ENCODE measurements at regions of chr16 and their contacts with region 1.

Region 1: GRCh38 chr16:50065624-50066481 is at the start of gene HEATR3:
- DNase-seq: peak; percentile 95
- H3K4me3 ChIP-seq: peak within 1 kb of the TSS; percentile 76 to 82 (median 76)
- H3K27ac ChIP-seq: peak within 1 kb of the TSS; percentile 67
- H3K4me1 ChIP-seq: peaks cover 27% of the 10 kb centered on the region
- H3K27me3 ChIP-seq: no peaks in the 10 kb centered on the region
- CTCF ChIP-seq: no peak
- POLR2A ChIP-seq: peak; percentile 39
- total RNA-seq, gene HEATR3: 17.0 and 23.1 TPM in 2 replicates

Region 2: DNA sequence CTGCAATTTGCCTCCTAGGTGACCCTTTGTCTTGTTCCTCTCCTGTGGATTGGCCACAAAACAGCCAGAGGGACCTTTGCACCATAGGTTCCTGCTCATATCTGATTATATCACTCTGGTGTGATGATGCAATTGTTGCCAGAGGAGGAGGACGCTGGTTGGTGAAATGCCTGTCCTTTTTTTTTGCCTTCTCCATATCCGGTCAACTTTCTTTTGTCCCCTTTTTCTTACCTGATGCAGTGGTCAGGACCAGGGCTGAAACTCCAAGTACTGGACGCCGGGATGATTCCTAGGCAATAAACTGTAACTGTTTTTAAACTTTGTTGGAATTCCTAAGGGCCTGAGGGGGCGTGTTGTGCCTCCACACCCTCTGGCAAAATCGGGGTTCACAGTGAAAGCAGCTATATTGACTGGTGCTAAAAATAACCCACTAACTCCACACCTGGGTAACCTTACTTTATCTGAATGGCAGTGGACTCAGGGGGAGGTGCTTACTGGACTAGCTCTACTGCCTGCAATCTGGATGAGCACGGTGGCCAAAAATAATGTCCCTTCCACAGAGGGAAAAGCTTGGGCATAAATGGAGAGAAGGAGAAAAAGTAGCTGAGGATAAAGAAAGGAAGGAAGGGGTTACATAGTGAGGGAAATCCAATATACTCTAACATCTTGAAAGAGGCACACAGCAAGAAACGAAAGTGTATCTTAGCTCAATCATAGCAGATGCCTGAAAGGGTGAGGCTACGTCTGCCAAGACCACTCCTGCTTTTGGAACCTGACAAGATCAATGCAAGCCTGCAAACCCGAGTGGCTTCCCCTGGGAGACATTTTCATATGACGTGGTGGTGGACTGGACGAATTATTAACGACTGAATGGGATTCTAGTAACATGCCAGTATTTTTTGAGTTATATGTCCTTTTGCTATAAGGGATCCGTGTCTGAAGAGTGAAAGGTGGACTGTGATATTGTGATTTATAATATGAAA is 181.5 kb before region 1 on chr16:
- CTCF ChIA-PET with region 1: no interaction called
- POLR2A ChIA-PET with region 1: no interaction called
- dilution Hi-C with region 1: no loop called
- intact Hi-C with region 1: no loop called
- DNase-seq: no peak
- H3K4me3 ChIP-seq: no peak overlapping the region
- H3K27ac ChIP-seq: no peak overlapping the region
- H3K4me1 ChIP-seq: no peaks in the 10 kb centered on the region
- H3K27me3 ChIP-seq: no peaks in the 10 kb centered on the region
- CTCF ChIP-seq: no peak
- POLR2A ChIP-seq: no peak

Region 3: GRCh38 chr16:50079397-50080140 is 13.7 kb after region 1 on chr16:
- CTCF ChIA-PET with region 1: interaction called, 16 read pairs
- POLR2A ChIA-PET with region 1: no interaction called
- dilution Hi-C with region 1: no loop called
- intact Hi-C with region 1: no loop called
- DNase-seq: no peak
- H3K4me3 ChIP-seq: no peak overlapping the region
- H3K27ac ChIP-seq: no peak overlapping the region
- H3K4me1 ChIP-seq: peaks cover 7% of the 10 kb centered on the region
- H3K27me3 ChIP-seq: no peaks in the 10 kb centered on the region
- CTCF ChIP-seq: no peak
- POLR2A ChIP-seq: no peak

Region 4: DNA sequence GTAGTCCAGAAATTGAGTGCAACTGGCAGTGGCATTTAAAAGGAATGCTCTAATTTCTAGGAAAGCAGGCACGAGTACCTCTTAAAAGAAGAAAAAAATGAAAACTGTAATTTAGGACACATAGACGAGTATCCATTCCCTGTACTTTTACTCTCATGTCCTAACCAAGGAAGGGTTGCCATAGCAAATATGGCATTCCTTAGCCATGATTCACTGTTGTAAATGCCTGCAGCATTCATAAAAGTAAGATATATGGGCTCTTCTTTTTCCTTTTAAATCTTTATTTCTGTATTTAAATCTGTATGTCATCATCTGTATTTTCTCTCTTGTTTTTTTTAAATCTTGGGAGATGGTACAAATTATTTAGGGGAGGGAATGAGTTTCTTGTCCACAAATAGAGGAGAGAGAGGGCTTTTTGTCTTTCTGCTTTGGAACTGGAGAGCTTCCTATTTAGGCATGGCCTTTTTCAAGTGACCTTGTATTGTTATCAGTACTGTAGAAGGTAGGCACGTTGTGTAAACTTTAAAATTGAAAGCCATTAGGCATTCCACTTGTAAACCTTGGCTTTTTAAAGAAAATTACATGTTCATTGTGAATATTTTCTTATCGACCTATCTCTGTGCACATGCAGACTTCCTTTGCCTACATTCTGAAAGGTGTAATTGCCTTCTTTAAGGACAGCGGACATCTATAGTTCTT is 137.2 kb after region 1 on chr16:
- CTCF ChIA-PET with region 1: interaction called, 7 read pairs
- POLR2A ChIA-PET with region 1: no interaction called
- dilution Hi-C with region 1: no loop called
- intact Hi-C with region 1: loop called (anchors 2 kb)
- DNase-seq: peak; percentile 88
- H3K4me3 ChIP-seq: peak overlapping the region in 1 of 3 experiments; percentile 12
- H3K27ac ChIP-seq: peak overlapping the region; percentile 93
- H3K4me1 ChIP-seq: peaks cover 30% of the 10 kb centered on the region
- H3K27me3 ChIP-seq: no peaks in the 10 kb centered on the region
- CTCF ChIP-seq: no peak
- POLR2A ChIP-seq: no peak

Region 5: GRCh38 chr16:50368410-50369132 is 302.7 kb after region 1 on chr16 and contains the start of gene BRD7:
- CTCF ChIA-PET with region 1: no interaction called
- POLR2A ChIA-PET with region 1: no interaction called
- dilution Hi-C with region 1: no loop called
- intact Hi-C with region 1: loop called (anchors 5 kb)
- DNase-seq: peak; percentile 39
- H3K4me3 ChIP-seq: peak within 1 kb of the TSS; percentile 46 to 96 (median 87)
- H3K27ac ChIP-seq: peak within 1 kb of the TSS; percentile 63
- H3K4me1 ChIP-seq: peaks cover 8% of the 10 kb centered on the region
- H3K27me3 ChIP-seq: no peaks in the 10 kb centered on the region
- CTCF ChIP-seq: peak in 1 of 2 donors; percentile 48
- POLR2A ChIP-seq: no peak
- total RNA-seq, gene BRD7: 69.1 and 78.0 TPM in 2 replicates

Region 6: DNA sequence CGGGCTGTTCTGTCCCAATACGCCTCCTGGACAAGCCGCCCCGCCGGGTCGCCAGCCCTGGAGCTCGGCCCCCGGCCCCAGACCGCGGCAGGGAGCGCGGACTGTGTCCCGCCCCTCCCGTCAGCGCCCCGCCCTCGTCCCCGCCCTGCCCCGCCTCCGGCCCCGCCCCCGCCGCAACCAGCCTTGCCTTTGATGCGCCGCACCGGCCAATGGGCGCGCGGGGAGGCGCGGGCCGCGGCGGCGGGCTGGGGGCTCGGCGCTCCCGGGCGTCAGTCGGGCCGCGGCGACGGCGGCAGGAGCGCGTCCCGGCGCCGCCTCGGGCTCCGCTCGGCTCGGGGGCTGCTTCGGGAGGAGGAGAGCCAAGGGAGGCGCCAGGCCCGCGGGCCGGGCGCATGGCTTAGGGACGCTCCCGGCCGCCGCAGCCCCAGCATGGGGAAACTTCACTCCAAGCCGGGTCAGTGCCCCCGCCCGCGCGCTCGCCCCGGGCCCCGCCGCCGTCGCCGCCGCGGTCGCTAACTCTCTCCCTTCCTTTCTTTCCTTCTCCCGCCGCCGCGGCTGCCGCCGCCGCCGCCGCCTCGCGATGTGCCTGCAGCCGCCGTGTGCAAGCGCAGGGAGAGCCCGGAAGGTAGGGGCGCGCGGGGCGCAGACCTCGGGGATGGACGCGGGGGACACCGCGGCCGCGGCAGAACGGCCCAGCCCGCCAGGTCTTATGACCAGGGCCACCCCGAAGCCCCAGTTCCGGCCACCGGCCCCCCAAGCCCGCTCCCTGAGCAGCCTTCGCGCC is 482.5 kb after region 1 on chr16 and contains the start of gene NKD1:
- CTCF ChIA-PET with region 1: no interaction called
- POLR2A ChIA-PET with region 1: no interaction called
- dilution Hi-C with region 1: no loop called
- intact Hi-C with region 1: loop called (anchors 5 kb)
- DNase-seq: peak; percentile 26
- H3K4me3 ChIP-seq: peak within 1 kb of the TSS; percentile 47 to 52 (median 48)
- H3K27ac ChIP-seq: no peak within 1 kb of the TSS
- H3K4me1 ChIP-seq: peaks cover 4% of the 10 kb centered on the region
- H3K27me3 ChIP-seq: peaks cover 37% of the 10 kb centered on the region in 2 experiments
- CTCF ChIP-seq: no peak
- POLR2A ChIP-seq: no peak
- total RNA-seq, gene NKD1: 0.32 TPM in 1 of 2 replicates, not detected in the other

Measured in endothelial cell of umbilical vein (primary cell).